ENCODE measurements at regions of chr4 and their contacts with region 1.

Region 1: DNA sequence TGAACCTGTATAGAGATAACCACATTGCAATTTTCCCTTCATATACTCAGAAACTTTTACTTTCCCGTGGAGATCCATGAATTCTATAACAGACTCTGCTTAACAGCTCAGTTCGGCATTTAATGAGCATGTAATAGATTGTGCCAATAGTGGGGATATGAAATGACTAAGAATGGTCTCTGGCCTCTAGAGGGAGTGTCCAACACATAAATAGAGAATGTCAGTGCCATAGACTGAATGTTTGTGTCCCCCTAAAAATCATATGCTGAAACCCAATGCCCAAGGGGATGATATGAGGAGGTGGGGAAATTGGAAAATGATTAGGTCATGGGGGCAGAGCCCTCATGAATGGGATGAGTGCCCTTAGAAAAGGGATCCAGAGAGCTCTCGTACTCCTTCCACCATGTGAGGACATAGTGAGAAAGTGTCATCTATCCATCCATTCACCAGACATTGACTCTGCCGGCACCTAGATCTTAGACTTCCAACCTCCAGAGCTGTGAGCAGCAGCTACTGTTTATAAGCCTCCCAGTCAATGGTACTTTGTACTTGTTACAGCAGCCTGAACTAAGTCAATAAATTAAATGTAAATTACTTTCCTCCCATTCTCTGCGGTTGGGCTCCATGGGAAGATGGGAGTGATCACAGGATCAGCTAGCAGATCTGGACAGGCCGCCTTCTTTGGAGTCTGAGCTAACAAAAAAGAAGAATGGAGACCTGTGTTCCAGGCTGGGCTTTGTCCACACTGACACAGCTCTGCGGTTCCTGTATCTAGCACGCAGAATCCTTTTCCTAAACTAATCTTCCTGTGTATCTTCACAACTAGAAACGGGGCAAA is 28.1 kb upstream of the HPSE start:
- DNase-seq: no peak
- H3K4me3 ChIP-seq: no peak overlapping the region
- CTCF ChIP-seq: peak; percentile 25

Region 2: DNA sequence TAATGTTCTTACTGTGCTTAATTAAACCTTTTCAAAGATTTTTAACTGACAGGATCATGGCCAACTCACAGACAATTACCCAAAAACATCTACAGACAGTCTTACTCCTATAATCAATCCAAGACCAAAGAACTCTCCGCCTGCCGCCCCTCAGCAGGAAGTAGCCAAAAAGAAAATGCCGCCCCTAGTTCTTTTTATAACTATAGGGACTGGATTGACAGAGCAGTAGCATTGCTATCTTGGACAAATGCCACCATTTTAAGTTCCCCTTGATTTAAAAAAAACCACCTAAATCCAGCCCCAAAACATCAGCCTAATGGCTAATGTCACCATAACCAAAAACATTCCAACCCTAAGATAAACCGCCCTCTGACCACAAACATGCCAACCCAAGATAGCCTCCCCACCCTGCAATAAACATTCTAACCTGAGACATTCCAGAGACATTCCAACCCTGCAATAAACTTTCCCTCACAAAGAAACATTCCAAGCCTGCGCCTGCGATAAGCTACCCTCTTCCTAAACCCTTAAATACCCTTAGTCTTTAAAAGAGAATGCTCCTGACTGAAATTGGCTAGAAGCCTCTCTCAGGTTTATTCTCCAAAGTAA is 155.1 kb before region 1 on chr4:
- CTCF ChIA-PET with region 1: no interaction called
- POLR2A ChIA-PET with region 1: no interaction called
- DNase-seq: peak; percentile 34
- H3K4me3 ChIP-seq: no peak overlapping the region
- CTCF ChIP-seq: no peak

Region 3: DNA sequence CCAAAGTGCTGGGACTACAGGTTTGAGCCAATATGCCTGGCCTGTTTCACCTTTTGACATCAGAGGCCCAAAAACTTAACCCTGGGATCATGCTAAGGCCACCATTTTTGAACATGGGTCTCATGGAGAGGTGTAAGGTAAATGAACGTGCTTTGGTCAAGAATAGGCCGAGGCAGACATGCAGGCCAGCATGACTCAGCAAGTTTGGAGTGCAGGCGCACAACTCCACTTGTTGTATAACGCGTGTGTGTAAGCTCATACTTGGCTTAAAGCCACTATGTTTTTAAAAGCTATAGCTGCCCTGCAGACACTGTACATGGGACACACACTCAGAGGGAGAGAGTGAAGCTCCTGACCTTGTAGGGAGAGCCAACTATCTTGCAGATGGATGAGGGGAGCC is 15.7 kb after region 1 on chr4:
- CTCF ChIA-PET with region 1: interaction called, 27 read pairs
- POLR2A ChIA-PET with region 1: no interaction called
- DNase-seq: no peak
- H3K4me3 ChIP-seq: no peak overlapping the region
- CTCF ChIP-seq: no peak